Mammary epithelial cell (primary cell): ENCODE measurements at regions of chr12 and their contacts with region 1.

Region 1: GRCh38 chr12:58540480-58541299 is 379.6 kb downstream of the LRIG3 start:
- DNase-seq: peak; percentile 62
- H3K4me3 ChIP-seq: no peak overlapping the region
- H3K27ac ChIP-seq: no peak overlapping the region
- H3K4me1 ChIP-seq: peaks cover 27% of the 10 kb centered on the region
- H3K27me3 ChIP-seq: no peaks in the 10 kb centered on the region
- CTCF ChIP-seq: peak; percentile 68 to 90

Region 2: GRCh38 chr12:57836442-57837375 is 704.0 kb before region 1 on chr12:
- CTCF ChIA-PET with region 1: no interaction called
- dilution Hi-C with region 1: no loop called
- in situ Hi-C with region 1: no loop called
- intact Hi-C with region 1: no loop called
- DNase-seq: peak; percentile 61
- H3K4me3 ChIP-seq: no peak overlapping the region
- H3K27ac ChIP-seq: peak overlapping the region; percentile 31
- H3K4me1 ChIP-seq: peaks cover 47% of the 10 kb centered on the region
- H3K27me3 ChIP-seq: no peaks in the 10 kb centered on the region
- CTCF ChIP-seq: no peak

Region 3: DNA sequence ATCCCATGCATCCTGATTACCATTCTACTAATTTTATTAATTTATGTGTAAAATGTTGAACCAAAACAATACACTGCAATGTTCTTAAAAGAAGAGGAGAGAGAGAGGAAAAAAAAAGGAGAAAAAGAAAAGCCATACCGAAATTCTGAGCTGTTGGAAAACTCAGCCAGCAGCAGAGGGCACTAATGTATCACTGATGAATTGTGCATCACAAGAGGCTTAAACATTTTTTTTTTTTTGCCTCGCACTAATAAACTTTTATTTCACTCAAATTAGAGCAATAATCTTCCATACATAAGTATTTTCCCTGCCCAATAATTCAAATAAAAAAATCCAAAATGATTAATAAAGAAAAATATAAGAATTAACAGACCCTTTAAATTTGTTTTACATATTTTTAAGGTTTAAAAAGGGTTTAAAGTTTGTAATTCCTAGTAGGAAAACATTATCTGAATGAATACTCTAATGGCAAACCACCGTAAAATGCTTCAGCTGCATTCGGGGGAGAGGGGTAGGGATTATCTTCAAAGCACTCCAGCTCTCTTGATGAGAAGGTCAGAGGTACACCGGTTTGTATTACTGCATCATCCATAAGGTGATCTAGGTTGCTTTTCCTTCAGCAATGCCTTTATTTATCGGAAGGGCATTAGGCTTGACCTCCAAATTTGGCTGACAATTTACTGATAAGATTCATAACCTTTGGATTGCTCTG is 557.4 kb before region 1 on chr12:
- CTCF ChIA-PET with region 1: no interaction called
- dilution Hi-C with region 1: no loop called
- in situ Hi-C with region 1: no loop called
- intact Hi-C with region 1: loop called (anchors 5 kb)
- DNase-seq: peak; percentile 28
- H3K4me3 ChIP-seq: no peak overlapping the region
- H3K27ac ChIP-seq: no peak overlapping the region
- H3K4me1 ChIP-seq: no peaks in the 10 kb centered on the region
- H3K27me3 ChIP-seq: no peaks in the 10 kb centered on the region
- CTCF ChIP-seq: peak; percentile 60 to 70

Region 4: GRCh38 chr12:58583541-58584339 is 43.0 kb after region 1 on chr12:
- CTCF ChIA-PET with region 1: no interaction called
- dilution Hi-C with region 1: no loop called
- in situ Hi-C with region 1: no loop called
- intact Hi-C with region 1: no loop called
- DNase-seq: no peak
- H3K4me3 ChIP-seq: no peak overlapping the region
- H3K27ac ChIP-seq: no peak overlapping the region
- H3K4me1 ChIP-seq: no peaks in the 10 kb centered on the region
- H3K27me3 ChIP-seq: no peaks in the 10 kb centered on the region
- CTCF ChIP-seq: no peak

Region 5: GRCh38 chr12:58732894-58733293 is 192.2 kb after region 1 on chr12:
- CTCF ChIA-PET with region 1: no interaction called
- dilution Hi-C with region 1: no loop called
- in situ Hi-C with region 1: no loop called
- intact Hi-C with region 1: loop called (anchors 10 kb)
- DNase-seq: no peak
- H3K4me3 ChIP-seq: no peak overlapping the region
- H3K27ac ChIP-seq: no peak overlapping the region
- H3K4me1 ChIP-seq: no peaks in the 10 kb centered on the region
- H3K27me3 ChIP-seq: no peaks in the 10 kb centered on the region
- CTCF ChIP-seq: no peak

Region 6: GRCh38 chr12:58877242-58877743 is 336.6 kb after region 1 on chr12:
- CTCF ChIA-PET with region 1: no interaction called
- dilution Hi-C with region 1: no loop called
- in situ Hi-C with region 1: no loop called
- intact Hi-C with region 1: loop called (anchors 5 kb)
- DNase-seq: peak; percentile 97
- H3K4me3 ChIP-seq: no peak overlapping the region
- H3K27ac ChIP-seq: no peak overlapping the region
- H3K4me1 ChIP-seq: peaks cover 10% of the 10 kb centered on the region
- H3K27me3 ChIP-seq: no peaks in the 10 kb centered on the region
- CTCF ChIP-seq: no peak

Region 7: DNA sequence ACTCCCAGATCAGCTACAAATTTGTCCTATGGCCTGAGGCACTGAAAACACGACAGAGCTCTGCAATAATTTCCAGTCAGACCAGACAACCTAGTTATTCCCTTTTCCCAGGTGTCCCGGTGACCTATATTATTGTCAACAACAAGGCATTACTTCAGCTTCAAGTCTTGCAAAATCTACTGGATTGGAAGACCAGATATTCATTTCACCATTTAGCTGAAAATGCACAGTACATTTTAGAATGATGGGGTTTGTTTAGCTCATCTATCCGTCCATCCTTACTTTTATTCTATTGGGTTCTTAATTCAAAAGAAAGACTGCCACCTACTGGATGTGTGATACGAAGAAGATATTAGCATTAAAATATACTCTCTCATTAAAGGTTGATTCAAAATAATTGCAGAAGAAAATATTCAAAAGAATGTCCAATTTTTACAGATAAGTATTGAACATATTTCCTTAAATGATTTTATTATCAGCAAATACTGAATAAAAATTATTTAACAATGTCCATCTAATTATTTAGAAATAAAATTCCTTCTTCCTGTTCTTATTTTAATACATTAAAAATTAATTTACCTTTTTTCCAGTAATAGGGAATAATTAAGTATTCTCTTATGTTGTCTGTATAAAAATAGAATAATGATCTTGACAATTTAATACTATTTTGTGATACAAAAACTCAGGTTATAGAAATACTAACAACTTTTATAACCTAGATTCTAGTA is 624.5 kb after region 1 on chr12:
- CTCF ChIA-PET with region 1: no interaction called
- dilution Hi-C with region 1: no loop called
- in situ Hi-C with region 1: no loop called
- intact Hi-C with region 1: loop called (anchors 5 kb)
- DNase-seq: peak; percentile 36
- H3K4me3 ChIP-seq: no peak overlapping the region
- H3K27ac ChIP-seq: no peak overlapping the region
- H3K4me1 ChIP-seq: no peaks in the 10 kb centered on the region
- H3K27me3 ChIP-seq: no peaks in the 10 kb centered on the region
- CTCF ChIP-seq: peak; percentile 47 to 65

Region 8: GRCh38 chr12:59372956-59373355 is 832.3 kb after region 1 on chr12:
- CTCF ChIA-PET with region 1: no interaction called
- dilution Hi-C with region 1: no loop called
- in situ Hi-C with region 1: no loop called
- intact Hi-C with region 1: no loop called
- DNase-seq: peak; percentile 31
- H3K4me3 ChIP-seq: no peak overlapping the region
- H3K27ac ChIP-seq: no peak overlapping the region
- H3K4me1 ChIP-seq: no peaks in the 10 kb centered on the region
- H3K27me3 ChIP-seq: no peaks in the 10 kb centered on the region
- CTCF ChIP-seq: peak; percentile 38 to 57